ENCODE measurements at regions of chr22 and their contacts with region 1.

Region 1: GRCh38 chr22:27880778-27881394 is 38.2 kb downstream of the PITPNB start:
- DNase-seq: peak; percentile 45
- H3K4me3 ChIP-seq: no peak overlapping the region
- H3K27me3 ChIP-seq: no peaks in the 10 kb centered on the region
- CTCF ChIP-seq: peak; percentile 68

Region 2: GRCh38 chr22:27780161-27780575 is 100.7 kb before region 1 on chr22:
- CTCF ChIA-PET with region 1: no interaction called
- POLR2A ChIA-PET with region 1: no interaction called
- DNase-seq: no peak
- H3K4me3 ChIP-seq: no peak overlapping the region
- H3K27me3 ChIP-seq: no peaks in the 10 kb centered on the region
- CTCF ChIP-seq: no peak

Region 3: DNA sequence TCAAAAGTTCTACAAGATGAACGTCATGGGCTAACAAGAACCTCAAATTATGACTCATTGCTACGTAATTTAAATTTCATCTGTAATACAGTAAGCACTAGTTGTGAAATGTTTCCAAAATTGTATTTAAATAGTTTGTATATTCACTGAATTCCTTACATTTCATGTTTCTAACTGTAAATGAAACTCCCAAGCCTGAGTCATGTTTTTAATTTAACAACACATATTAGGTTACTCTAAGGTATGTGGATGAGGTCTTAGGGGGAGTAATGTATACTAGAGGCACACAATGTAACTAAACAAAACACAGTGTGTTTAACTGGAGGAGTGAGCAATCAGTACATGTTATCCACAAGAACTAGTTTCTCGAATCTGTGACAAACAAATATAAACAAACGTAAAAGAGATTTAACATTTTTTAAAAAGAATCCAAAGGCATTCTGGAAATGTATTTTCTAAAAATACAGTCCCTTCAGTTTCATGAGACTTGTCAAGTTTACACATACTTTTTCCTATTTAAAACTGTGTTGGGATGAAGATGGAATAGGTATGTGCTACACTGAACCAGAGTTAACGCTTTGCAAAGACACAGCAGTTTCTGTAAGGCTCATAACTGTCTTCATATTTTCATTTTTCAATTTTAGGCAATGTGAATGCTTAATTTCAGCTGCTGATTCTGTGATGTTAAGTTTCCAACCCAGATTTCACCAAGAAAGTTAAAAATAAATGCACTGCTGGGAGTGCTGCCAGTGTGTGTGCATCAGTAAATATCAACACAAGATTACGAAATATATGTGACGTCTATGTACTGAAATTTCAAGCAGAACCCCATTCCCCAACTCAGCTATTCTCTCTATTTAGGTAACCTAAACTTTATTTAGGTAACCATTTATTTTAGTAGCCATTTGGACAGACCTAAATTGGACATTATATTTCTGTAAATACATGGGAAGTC is 14.5 kb before region 1 on chr22:
- CTCF ChIA-PET with region 1: interaction called, 31 read pairs
- POLR2A ChIA-PET with region 1: no interaction called
- DNase-seq: peak; percentile 85
- H3K4me3 ChIP-seq: no peak overlapping the region
- H3K27me3 ChIP-seq: no peaks in the 10 kb centered on the region
- CTCF ChIP-seq: no peak

Region 4: DNA sequence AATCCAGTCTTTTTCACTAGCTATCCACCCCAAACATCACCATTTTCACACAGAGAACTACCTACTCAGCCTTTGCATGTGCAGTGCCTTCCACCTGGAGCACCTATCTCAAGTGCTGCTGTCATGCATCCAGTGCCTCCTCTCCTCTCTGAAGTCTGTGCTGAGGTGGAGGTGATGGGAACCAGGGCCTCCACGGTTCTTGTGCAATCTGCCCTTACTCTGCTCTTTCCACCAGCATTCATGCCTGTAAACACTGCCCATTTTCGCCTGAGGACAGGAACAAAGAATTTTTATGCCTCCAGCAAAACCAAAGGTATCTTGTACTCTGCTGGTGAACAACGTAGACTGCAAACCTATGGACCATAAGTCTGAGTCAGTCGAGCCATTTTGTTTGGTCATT is 11.2 kb after region 1 on chr22:
- CTCF ChIA-PET with region 1: interaction called, 17 read pairs
- POLR2A ChIA-PET with region 1: no interaction called
- DNase-seq: no peak
- H3K4me3 ChIP-seq: no peak overlapping the region
- H3K27me3 ChIP-seq: no peaks in the 10 kb centered on the region
- CTCF ChIP-seq: no peak

Region 5: DNA sequence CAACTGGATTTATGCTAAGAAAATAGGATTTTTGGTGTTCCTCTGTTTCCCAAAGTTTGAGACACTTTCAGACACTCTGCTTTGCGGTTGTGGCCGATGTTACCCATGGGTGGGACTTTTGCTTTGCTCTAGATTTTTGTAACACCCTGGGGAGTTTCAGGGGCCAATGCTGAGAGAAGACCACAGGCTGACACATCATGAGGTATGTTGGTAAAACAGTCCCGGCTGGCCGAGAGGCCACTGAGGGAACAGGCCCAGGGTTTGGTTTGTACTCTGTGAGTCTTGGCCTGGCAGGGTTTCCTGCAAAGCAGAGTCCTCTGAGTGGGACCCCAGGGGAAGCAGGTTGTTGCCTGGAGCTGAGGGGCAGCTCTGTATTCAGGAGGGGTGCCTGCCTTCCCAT is 116.7 kb after region 1 on chr22:
- CTCF ChIA-PET with region 1: interaction called, 26 read pairs
- POLR2A ChIA-PET with region 1: interaction called, 5 read pairs
- DNase-seq: no peak
- H3K4me3 ChIP-seq: no peak overlapping the region
- H3K27me3 ChIP-seq: no peaks in the 10 kb centered on the region
- CTCF ChIP-seq: no peak

Region 6: GRCh38 chr22:28009272-28009827 is 128.5 kb after region 1 on chr22:
- CTCF ChIA-PET with region 1: interaction called, 127 read pairs
- POLR2A ChIA-PET with region 1: no interaction called
- DNase-seq: peak; percentile 35
- H3K4me3 ChIP-seq: no peak overlapping the region
- H3K27me3 ChIP-seq: no peaks in the 10 kb centered on the region
- CTCF ChIP-seq: peak; percentile 96